Head of caudate nucleus (tissue), 42 donors: ENCODE measurements at regions of chr2 and their contacts with region 1.

Region 1: GRCh38 chr2:212520340-212520739 is 18.3 kb downstream of the ERBB4 start:
- DNase-seq: peak in 2 of 42 donors; percentile 37 to 38

Region 2: GRCh38 chr2:212421556-212422334 is 98.6 kb before region 1 on chr2:
- intact Hi-C with region 1: loop called (anchors 10 kb)
- DNase-seq: no peak